ENCODE measurements at regions of chrX and their contacts with region 1.

Region 1: GRCh38 chrX:119516157-119516702 is 48.0 kb downstream of the SLC25A5 start:
- DNase-seq: peak; percentile 75
- ATAC-seq: peak; percentile 65
- H3K4me3 ChIP-seq: no peak overlapping the region
- H3K27ac ChIP-seq: no peak overlapping the region
- H3K4me1 ChIP-seq: peaks cover 4% of the 10 kb centered on the region
- H3K27me3 ChIP-seq: no peaks in the 10 kb centered on the region
- CTCF ChIP-seq: peak; percentile 91

Region 2: GRCh38 chrX:118904218-118904617 is 612.0 kb before region 1 on chrX:
- CTCF ChIA-PET with region 1: no interaction called
- POLR2A ChIA-PET with region 1: no interaction called
- intact Hi-C with region 1: no loop called
- DNase-seq: no peak
- ATAC-seq: no peak
- H3K4me3 ChIP-seq: no peak overlapping the region
- H3K27ac ChIP-seq: no peak overlapping the region
- H3K4me1 ChIP-seq: no peaks in the 10 kb centered on the region
- H3K27me3 ChIP-seq: no peaks in the 10 kb centered on the region
- CTCF ChIP-seq: no peak

Region 3: DNA sequence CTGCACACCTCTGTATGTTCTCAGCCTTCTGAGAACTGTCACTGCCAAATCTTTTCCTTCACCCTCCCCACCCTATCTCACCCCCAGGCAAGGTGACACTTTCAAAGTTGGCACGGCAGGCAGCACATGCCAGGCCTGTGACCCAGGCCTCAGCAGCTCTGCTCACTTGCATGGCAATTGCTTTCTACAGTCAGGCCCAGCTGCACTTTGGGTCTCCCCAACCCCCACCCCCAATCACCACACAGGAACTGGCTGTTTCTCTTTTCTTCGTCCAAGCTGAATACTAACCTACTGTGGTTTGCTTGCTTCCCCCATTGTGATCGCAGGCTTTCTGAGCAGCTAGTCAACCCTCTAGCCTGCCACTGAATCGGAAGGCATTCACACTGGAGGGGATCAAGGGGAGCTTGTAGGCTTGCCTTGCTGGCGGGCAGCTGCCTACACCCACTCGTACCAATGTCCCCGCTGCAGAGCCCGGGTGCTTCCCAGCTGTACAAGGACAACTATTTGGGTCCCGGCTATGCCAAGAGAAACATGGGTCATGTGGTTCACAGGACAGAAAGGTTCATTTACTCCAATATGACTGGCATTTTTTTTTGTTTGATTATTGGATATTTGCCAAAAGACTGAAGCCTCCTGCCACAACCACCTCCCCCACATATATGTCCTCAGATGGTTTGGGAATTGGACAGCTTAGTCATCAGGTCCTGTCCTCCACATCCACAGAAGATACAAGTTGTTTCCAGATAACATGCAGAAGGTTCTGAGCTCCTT is 89.0 kb before region 1 on chrX:
- CTCF ChIA-PET with region 1: no interaction called
- POLR2A ChIA-PET with region 1: no interaction called
- intact Hi-C with region 1: no loop called
- DNase-seq: peak; percentile 18
- ATAC-seq: no peak
- H3K4me3 ChIP-seq: no peak overlapping the region
- H3K27ac ChIP-seq: no peak overlapping the region
- H3K4me1 ChIP-seq: no peaks in the 10 kb centered on the region; the same call in 1 of the 2 replicates
- H3K27me3 ChIP-seq: no peaks in the 10 kb centered on the region
- CTCF ChIP-seq: no peak

Region 4: GRCh38 chrX:119468930-119469635 is 47.1 kb before region 1 on chrX:
- CTCF ChIA-PET with region 1: interaction called, 6 read pairs
- POLR2A ChIA-PET with region 1: no interaction called
- intact Hi-C with region 1: loop called (anchors 1 kb)
- DNase-seq: peak; percentile 83
- ATAC-seq: peak; percentile 68
- H3K4me3 ChIP-seq: peak overlapping the region; percentile 98
- H3K27ac ChIP-seq: peak overlapping the region; percentile 72
- H3K4me1 ChIP-seq: peaks cover 8% of the 10 kb centered on the region
- H3K27me3 ChIP-seq: no peaks in the 10 kb centered on the region
- CTCF ChIP-seq: peak; percentile 64

Region 5: DNA sequence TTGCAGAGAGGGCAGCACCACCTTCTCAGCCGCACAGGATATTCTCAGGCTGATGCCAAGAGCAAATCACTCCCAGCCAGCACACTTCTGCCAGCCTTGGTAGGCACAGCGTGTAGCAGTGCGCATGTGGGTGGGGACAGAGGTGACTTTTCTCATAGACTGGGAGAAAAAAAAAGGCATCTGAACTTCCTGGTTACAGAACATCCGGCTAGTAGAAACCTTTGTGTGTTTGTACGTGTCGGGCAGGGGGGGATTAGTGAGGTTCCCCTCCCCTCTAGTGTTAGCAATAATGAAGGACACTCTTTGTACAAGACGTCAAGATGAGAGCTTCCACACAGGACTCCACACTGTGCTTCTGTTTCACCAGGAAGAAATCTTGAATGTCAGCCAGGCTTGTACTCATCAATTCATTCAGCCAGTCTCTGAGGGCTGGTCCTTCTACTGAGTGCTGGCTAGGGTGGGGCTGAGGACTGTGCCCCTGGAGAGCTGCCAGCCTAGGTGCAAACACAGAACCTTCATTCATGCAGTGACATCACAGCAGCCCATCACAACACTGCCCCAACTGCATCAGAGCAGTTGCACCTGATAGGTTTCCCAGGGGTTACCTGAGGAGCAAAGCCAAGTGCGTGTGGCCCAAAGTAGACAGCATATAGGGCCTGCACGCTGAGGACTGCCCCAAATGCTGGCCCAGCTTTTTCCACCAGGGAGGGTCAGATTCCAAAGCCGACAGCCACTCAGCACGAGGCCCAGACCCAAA is 13.3 kb before region 1 on chrX:
- CTCF ChIA-PET with region 1: interaction called, 10 read pairs
- POLR2A ChIA-PET with region 1: interaction called, 6 read pairs
- intact Hi-C with region 1: no loop called
- DNase-seq: peak; percentile 86
- ATAC-seq: peak; percentile 77
- H3K4me3 ChIP-seq: peak overlapping the region; percentile 39; the same call in 1 of the 2 replicates
- H3K27ac ChIP-seq: peak overlapping the region; percentile 100
- H3K4me1 ChIP-seq: peaks cover 35% of the 10 kb centered on the region
- H3K27me3 ChIP-seq: no peaks in the 10 kb centered on the region
- CTCF ChIP-seq: no peak; the same call in 1 of the 2 replicates

Region 6: GRCh38 chrX:119583431-119584059 is 67.3 kb after region 1 on chrX:
- CTCF ChIA-PET with region 1: no interaction called
- POLR2A ChIA-PET with region 1: no interaction called
- intact Hi-C with region 1: no loop called
- DNase-seq: no peak
- ATAC-seq: no peak
- H3K4me3 ChIP-seq: no peak overlapping the region
- H3K27ac ChIP-seq: no peak overlapping the region
- H3K4me1 ChIP-seq: no peaks in the 10 kb centered on the region
- H3K27me3 ChIP-seq: no peaks in the 10 kb centered on the region
- CTCF ChIP-seq: no peak

Region 7: DNA sequence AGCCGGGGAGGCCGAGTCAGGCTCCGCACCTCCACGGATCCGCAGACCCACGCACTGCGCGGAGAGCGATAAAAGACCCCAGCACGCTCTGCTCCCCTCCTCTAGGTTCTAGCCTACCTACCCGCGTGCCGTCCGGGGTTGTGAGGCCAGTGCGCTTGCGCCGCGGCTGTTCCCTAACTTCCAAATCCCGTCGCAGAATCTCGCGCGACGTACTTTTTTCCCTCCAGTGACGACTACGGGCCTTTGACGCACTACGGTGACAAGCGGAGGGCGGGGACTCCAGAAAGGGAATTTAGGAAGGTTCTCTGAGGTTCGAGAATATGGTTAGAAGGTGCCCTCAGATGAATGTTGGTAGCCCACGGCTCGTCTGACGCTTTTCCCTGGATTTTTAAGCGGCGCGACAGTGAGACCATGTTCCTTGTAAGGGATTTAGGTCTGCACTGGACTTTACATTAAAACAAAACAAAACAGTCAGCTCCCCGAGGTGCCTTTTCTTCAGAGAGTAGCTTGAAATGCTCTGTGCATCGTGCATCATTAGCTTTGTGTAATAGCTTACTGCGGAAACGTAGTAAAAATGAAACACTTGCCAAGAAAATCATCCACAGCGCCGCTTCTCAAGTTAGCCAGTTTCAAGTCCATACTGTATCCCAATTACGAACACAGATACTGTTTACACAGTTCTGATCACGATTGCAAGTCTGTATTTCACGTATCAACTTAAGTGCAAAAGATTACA is 90.2 kb after region 1 on chrX and contains the start of gene NKRF:
- CTCF ChIA-PET with region 1: no interaction called
- POLR2A ChIA-PET with region 1: interaction called, 7 read pairs
- intact Hi-C with region 1: loop called (anchors 2 kb)
- DNase-seq: peak; percentile 95
- ATAC-seq: peak; percentile 78
- H3K4me3 ChIP-seq: peak within 1 kb of the TSS; percentile 93
- H3K27ac ChIP-seq: peak within 1 kb of the TSS; percentile 60
- H3K4me1 ChIP-seq: peaks cover 20% of the 10 kb centered on the region
- H3K27me3 ChIP-seq: no peaks in the 10 kb centered on the region
- CTCF ChIP-seq: no peak
- total RNA-seq, gene NKRF: 9.1 and 11.4 TPM in 2 replicates

Region 8: GRCh38 chrX:119721487-119721886 is 205.3 kb after region 1 on chrX:
- CTCF ChIA-PET with region 1: no interaction called
- POLR2A ChIA-PET with region 1: no interaction called
- intact Hi-C with region 1: no loop called
- DNase-seq: peak; percentile 47
- ATAC-seq: peak; percentile 64
- H3K4me3 ChIP-seq: no peak overlapping the region
- H3K27ac ChIP-seq: no peak overlapping the region
- H3K4me1 ChIP-seq: no peaks in the 10 kb centered on the region
- H3K27me3 ChIP-seq: no peaks in the 10 kb centered on the region
- CTCF ChIP-seq: no peak